Left colon (tissue), 2 donors: ENCODE measurements at regions of chr9 and their contacts with region 1.

Region 1: DNA sequence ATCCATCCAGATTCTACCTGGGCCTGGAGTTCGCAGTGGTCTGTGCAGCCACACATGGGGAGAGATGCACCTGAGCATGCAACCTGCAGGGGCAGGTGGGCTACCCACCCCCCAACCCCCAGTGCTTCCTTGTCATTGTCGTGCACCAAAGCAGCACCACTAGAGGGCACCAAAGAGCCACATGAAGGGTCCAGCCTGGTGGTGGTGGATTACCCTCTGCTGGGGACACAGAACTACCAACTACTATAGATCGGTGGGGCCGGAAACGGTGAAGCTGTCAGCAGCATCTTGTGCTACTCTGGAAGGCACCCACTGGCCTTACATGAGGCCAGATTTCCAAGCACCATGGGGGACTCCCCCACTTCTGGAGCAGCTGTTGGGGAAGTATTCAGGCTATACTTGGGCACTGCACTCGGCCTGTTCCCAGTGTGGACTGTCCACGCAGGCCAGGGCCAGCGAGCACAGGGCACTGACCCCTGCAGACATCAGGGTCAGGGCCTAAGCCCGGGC is 60.2 kb upstream of the TBC1D2 start:
- DNase-seq: peak; percentile 49 to 86
- ATAC-seq: peak; percentile 82

Region 2: DNA sequence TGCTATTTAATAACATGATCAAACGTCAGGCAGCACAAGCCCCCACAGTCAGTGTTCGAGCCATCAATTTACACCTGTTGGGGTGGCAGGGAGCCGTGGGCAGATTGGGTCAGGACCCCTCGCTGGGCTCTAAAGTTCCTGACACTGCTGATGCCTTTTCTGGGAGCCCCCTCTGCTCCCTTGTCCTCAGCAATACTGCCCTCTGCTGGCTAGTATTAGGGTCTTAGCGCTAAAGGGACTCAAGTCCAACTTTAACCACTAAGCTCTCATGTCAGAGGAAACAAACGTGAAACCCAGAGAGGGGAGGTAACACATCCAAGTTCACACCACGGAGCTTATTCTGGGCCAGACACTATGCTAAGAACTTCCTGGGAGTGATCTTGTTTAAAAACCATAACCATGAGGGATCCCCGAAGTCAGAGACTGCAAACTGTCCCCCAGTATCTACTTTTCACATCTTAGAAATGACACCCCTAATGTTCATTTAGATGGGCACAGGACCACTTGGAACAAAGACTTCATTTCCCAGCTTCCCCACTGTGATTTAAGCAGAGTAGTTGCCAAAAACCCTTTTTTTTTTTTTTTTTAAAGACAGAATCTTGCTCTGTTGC is 460.3 kb after region 1 on chr9:
- intact Hi-C with region 1: loop called in 1 of 2 experiments (anchors 10 kb)
- DNase-seq: no peak
- ATAC-seq: peak; percentile 49